PC-9 (cell line): ENCODE measurements at regions of chr19 and their contacts with region 1.

Region 1: DNA sequence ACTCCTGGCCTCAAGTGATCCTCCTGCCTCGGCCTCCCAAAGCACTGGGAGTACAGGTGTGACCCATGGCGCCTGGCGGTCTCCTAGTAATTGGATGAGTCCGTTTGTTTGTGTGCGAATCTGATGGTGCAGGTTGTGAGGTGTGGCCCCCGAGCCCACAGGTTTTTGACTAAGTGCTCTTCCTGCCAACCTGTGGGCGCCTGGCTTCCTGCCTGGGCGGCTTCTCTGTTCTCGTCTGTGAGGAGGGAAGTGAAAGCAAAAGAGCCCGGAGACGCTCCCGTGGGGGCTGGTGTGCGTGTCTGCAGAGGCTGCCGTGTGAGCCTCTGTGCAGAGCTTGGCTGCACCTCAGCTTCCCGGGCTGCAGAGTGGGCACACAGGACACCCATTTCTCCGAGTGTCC is 10.0 kb downstream of the ARHGAP45 start:
- DNase-seq: no peak
- H3K4me3 ChIP-seq: no peak overlapping the region
- H3K27ac ChIP-seq: no peak overlapping the region
- H3K4me1 ChIP-seq: 0 out of 2 replicates have a peak, but pooled peaks cover 9% of the 10 kb centered on the region
- H3K27me3 ChIP-seq: no peaks in the 10 kb centered on the region
- CTCF ChIP-seq: no peak

Region 2: DNA sequence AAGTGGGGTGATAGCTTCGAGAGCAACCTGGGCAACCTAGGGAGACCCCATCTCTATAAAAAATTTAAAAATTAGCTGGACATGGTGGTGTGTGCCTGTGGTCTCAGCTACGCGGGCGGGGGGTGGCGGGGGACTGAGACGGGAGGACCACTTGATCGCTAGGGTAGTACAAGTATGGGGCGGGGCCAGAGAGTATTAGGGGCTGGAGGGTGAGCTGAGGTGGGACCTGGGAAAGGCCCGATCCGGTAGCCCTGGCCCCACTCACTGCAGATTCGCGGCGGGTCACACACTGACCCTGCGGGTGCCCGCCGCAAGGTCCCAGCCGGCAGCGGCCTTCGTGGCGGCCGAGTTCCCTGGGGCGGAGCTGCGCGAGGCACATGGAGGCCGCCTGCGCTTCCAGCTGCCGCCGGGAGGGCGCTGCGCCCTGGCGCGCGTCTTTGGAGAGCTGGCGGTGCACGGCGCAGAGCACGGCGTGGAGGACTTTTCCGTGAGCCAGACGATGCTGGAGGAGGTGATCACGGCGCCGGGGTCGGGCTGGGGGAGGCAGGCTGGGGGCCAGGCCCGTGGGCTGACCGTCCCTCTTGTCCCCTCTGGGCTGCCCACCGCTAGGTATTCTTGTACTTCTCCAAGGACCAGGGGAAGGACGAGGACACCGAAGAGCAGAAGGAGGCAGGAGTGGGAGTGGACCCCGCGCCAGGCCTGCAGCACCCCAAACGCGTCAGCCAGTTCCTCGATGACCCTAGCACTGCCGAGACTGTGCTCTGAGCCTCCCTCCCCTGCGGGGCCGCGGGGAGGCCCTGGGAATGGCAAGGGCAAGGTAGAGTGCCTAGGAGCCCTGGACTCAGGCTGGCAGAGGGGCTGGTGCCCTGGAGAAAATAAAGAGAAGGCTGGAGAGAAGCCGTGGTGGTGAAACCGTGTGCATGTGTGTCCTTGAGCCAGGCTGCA is 12.0 kb before region 1 on chr19:
- CTCF ChIA-PET with region 1: interaction called, 18 read pairs
- POLR2A ChIA-PET with region 1: no interaction called
- intact Hi-C with region 1: no loop called
- DNase-seq: peak in 1 of 2 experiments; percentile 54
- H3K4me3 ChIP-seq: peak overlapping the region; percentile 15; the same call in 1 of the 2 replicates
- H3K27ac ChIP-seq: peak overlapping the region; percentile 57
- H3K4me1 ChIP-seq: peaks cover 19% of the 10 kb centered on the region
- H3K27me3 ChIP-seq: no peaks in the 10 kb centered on the region
- CTCF ChIP-seq: peak; percentile 62; the same call in 1 of the 2 replicates

Region 3: DNA sequence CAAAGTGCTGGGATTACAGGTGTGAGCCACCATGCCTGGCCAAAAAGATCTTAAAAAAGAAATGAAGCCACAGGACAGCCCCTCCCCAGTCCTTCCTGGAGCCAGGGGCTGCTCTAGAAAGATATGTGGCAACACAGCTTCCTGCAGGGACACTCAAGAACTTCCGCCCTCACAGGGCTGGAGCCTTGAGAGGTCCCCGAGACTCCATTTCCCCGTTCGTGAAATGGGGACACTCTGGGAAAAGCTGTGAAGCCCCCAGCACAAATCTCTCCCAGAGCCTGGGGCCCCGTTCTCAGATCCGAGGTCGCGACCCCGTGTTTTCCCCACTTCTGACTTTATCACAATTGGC is 24.4 kb after region 1 on chr19:
- CTCF ChIA-PET with region 1: no interaction called
- POLR2A ChIA-PET with region 1: no interaction called
- intact Hi-C with region 1: no loop called
- DNase-seq: no peak
- H3K4me3 ChIP-seq: no peak overlapping the region
- H3K27ac ChIP-seq: peak overlapping the region; percentile 97
- H3K4me1 ChIP-seq: peaks cover 74% of the 10 kb centered on the region
- H3K27me3 ChIP-seq: no peaks in the 10 kb centered on the region
- CTCF ChIP-seq: no peak